ENCODE measurements at regions of chr7 and their contacts with region 1.

Region 1: DNA sequence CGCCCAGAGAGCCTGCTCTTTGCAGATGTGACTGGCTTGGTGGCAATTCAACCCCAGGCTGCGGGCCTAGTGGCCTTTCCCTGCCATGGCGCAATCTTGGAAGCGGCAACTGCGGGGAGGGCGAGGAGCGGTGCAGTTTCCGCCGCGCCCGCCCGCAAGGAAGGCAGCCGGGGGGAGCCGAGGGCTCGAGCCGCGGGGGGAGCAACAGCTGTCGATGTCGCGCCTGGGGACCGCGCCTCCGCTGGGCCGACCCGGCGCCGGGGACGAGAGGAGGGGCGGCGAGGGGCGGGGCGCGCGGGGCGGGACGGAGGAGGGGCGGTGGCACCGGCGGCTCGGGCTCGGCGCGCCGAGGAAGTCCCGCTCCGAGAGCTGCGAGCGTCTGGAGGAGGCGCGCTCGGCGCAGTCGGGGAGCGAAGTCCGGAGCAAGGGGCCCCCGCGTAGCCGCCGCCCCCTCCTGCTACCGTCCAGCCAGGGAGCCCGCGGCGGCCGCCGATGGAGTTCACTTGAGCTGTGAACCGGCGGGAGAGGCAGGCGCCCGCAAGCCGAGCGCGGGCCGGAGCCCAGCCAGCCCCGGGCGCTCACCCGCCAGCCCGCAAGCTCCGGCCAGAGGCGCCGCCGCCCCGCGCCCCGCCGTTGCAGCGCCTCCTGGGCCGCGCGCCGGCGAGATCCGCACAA is 438.1 kb upstream of the GALNT17 start:
- DNase-seq: peak; percentile 91
- CTCF ChIP-seq: no peak

Region 2: DNA sequence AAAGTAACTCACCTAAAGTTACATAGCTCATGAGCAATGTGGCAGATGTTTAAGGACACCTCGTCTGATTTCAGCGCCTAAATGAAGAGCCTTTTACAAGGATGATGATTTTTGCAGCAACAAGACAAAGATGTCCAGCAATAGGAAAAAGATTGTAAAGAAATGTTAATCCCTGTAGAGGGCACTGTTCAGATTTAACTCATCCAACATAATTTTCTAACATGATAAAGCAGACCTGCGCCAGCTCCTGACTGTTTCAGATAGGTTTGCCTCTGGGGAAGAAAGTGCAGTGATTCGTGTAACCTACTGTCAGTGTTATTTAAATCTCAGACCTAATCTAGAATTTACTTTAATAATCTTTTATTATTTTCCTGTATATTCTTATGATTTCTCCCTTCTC is 500.3 kb before region 1 on chr7:
- in situ Hi-C with region 1: loop called (anchors 25 kb)
- DNase-seq: peak; percentile 24
- CTCF ChIP-seq: peak; percentile 39

Region 3: GRCh38 chr7:70325509-70326101 is 368.2 kb before region 1 on chr7:
- in situ Hi-C with region 1: loop called (anchors 25 kb)
- DNase-seq: no peak
- CTCF ChIP-seq: no peak

Measured in GM13977 (cell line).